AG04450 (cell line): ENCODE measurements at regions of chr16 and their contacts with region 1.

Region 1: GRCh38 chr16:67260426-67261075 is 11.8 kb downstream of the SLC9A5 start:
- DNase-seq: no peak
- H3K4me3 ChIP-seq: no peak overlapping the region
- H3K27ac ChIP-seq: no peak overlapping the region
- H3K27me3 ChIP-seq: no peaks in the 10 kb centered on the region
- CTCF ChIP-seq: peak; percentile 82

Region 2: DNA sequence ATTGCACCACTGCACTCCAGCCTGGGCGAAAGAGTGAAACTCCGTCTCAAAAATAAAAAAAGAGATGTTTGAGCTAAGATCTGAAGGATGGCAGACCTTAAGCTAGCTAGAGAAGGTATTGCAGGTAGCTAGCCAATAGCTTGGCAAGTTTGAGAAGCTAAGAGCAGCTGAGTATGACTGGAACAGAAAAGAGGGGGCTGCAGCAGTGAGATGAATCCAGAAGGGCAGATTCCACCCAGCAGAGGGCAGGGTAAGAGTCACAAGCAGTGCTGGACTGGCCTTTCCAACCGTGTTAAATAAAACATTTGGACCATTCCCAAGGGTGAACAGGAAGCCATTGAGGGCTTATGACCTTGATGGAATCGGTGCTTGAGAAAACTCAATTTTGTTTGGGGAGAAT is 156.5 kb before region 1 on chr16:
- CTCF ChIA-PET with region 1: no interaction called
- POLR2A ChIA-PET with region 1: no interaction called
- DNase-seq: no peak
- H3K4me3 ChIP-seq: no peak overlapping the region
- H3K27ac ChIP-seq: no peak overlapping the region
- H3K27me3 ChIP-seq: no peaks in the 10 kb centered on the region
- CTCF ChIP-seq: peak; percentile 37

Region 3: DNA sequence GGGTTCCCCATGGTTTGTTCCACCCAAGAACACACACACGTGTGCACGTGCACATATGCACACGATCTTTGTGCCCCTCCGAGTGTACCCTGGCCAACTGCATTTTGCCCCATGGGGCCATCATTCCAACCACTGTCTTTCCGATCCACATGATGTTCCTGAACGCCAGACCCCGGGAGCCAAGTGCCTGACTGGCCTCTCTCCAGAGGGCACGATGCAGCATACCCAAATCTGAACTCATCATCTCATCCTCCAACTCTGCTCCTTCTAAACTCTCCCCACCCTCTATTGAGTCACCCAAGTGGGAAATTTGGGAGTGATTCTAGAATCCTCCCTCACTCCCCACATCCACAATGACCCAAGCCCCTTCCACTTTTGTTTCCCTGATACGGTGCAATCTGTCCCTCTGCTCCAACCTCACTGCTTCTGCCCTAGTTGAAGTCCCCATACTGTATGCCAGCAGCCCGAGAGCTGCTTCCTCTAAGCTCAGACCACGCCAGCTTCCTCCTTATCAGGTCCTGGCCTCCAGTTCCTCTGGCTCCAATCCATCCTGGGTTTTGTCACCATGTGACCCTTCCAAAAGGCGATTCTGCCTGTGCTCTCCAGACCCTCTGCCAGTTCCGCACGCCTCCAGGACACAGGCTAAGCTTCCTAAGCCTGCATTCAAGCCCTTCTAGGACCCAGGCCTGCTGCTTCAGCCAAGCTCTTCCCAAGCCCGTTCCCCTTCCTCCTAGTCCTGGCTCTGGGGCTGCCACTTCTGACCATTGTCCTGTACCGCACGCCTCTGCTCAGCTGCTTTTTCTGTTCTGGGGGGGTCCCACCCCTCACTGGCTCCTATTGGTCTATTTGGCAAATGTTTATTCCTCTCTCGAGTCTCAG is 43.7 kb before region 1 on chr16:
- CTCF ChIA-PET with region 1: no interaction called
- POLR2A ChIA-PET with region 1: no interaction called
- DNase-seq: no peak
- H3K4me3 ChIP-seq: no peak overlapping the region
- H3K27ac ChIP-seq: no peak overlapping the region
- H3K27me3 ChIP-seq: no peaks in the 10 kb centered on the region
- CTCF ChIP-seq: no peak

Region 4: GRCh38 chr16:67246934-67247697 is 13.4 kb before region 1 on chr16 and contains the start of gene FHOD1:
- CTCF ChIA-PET with region 1: interaction called, 14 read pairs
- POLR2A ChIA-PET with region 1: no interaction called
- DNase-seq: peak; percentile 79
- H3K4me3 ChIP-seq: peak within 1 kb of the TSS; percentile 86
- H3K27ac ChIP-seq: peak within 1 kb of the TSS; percentile 90
- H3K27me3 ChIP-seq: no peaks in the 10 kb centered on the region
- CTCF ChIP-seq: no peak
- polyA plus RNA-seq, gene FHOD1: 21.2 and 25.4 TPM in 2 replicates

Region 5: GRCh38 chr16:67339453-67339852 is 78.9 kb after region 1 on chr16:
- CTCF ChIA-PET with region 1: interaction called, 37 read pairs
- POLR2A ChIA-PET with region 1: interaction called, 5 read pairs
- DNase-seq: peak; percentile 10
- H3K4me3 ChIP-seq: no peak overlapping the region
- H3K27ac ChIP-seq: no peak overlapping the region
- H3K27me3 ChIP-seq: no peaks in the 10 kb centered on the region
- CTCF ChIP-seq: peak; percentile 47

Region 6: GRCh38 chr16:67393035-67393787 is 132.7 kb after region 1 on chr16 and contains the start of gene TPPP3:
- CTCF ChIA-PET with region 1: interaction called, 19 read pairs
- POLR2A ChIA-PET with region 1: interaction called, 3 read pairs
- DNase-seq: no peak
- H3K4me3 ChIP-seq: peak within 1 kb of the TSS; percentile 54
- H3K27ac ChIP-seq: no peak within 1 kb of the TSS
- H3K27me3 ChIP-seq: peaks cover 7% of the 10 kb centered on the region
- CTCF ChIP-seq: peak; percentile 65
- polyA plus RNA-seq, gene TPPP3: 1.5 TPM in 2 replicates

Region 7: GRCh38 chr16:67399181-67399733 is 138.7 kb after region 1 on chr16:
- CTCF ChIA-PET with region 1: interaction called, 19 read pairs
- POLR2A ChIA-PET with region 1: no interaction called
- DNase-seq: no peak
- H3K4me3 ChIP-seq: no peak overlapping the region
- H3K27ac ChIP-seq: no peak overlapping the region
- H3K27me3 ChIP-seq: no peaks in the 10 kb centered on the region
- CTCF ChIP-seq: peak; percentile 70

Region 8: DNA sequence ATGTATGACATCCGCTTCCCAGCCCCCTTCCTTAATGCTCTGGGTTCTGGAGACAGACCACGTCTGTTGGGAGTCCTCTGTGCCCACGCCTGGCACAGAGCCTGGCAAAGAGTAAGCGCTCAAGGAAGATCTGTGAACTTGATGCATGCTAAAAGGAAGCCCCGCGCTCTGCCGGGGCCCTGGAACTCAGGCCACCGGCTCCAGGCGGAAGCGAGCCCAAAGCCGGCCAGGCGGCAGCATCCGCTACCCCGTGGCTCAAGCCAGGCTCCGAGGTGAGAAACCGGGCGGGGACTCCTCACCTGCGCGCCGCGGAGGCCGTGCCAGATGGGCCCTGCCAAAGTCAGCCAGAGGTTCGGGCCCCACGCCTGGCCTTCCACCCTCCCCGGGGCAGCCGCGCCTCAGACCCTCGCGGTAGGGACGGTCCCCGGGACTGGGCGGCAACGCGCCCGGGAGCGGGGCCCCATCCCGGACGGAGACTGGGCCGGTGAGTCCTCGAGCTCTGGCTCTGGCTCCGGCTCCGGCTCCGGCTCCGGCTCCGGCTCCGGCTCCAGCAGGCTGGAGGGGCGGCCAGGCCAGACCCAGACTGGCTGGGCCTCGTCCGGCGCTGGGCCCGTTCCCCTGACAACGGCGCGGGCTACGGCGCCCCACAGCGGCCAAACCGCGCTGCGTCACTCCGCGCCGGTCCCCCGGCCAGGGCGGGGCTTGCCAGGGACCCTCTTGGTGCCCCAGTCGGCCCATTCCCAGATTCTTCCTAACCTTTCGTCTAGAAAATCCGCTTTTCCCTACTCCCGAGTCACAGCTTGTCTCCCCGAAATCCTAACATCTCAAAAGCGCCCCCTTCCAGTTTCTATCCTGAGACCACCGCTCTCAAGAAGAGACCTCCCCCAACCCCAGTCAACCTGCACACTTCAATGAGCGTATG is 155.6 kb after region 1 on chr16 and contains the start of gene ZDHHC1:
- CTCF ChIA-PET with region 1: interaction called, 10 read pairs
- POLR2A ChIA-PET with region 1: no interaction called
- DNase-seq: no peak
- H3K4me3 ChIP-seq: peak within 1 kb of the TSS; percentile 74
- H3K27ac ChIP-seq: peak within 1 kb of the TSS; percentile 47
- H3K27me3 ChIP-seq: no peaks in the 10 kb centered on the region
- CTCF ChIP-seq: peak; percentile 38
- polyA plus RNA-seq, gene ZDHHC1: 1.9 and 2.7 TPM in 2 replicates